T-cell (primary cell): ENCODE measurements at regions of chr19 and their contacts with region 1.

Region 1: DNA sequence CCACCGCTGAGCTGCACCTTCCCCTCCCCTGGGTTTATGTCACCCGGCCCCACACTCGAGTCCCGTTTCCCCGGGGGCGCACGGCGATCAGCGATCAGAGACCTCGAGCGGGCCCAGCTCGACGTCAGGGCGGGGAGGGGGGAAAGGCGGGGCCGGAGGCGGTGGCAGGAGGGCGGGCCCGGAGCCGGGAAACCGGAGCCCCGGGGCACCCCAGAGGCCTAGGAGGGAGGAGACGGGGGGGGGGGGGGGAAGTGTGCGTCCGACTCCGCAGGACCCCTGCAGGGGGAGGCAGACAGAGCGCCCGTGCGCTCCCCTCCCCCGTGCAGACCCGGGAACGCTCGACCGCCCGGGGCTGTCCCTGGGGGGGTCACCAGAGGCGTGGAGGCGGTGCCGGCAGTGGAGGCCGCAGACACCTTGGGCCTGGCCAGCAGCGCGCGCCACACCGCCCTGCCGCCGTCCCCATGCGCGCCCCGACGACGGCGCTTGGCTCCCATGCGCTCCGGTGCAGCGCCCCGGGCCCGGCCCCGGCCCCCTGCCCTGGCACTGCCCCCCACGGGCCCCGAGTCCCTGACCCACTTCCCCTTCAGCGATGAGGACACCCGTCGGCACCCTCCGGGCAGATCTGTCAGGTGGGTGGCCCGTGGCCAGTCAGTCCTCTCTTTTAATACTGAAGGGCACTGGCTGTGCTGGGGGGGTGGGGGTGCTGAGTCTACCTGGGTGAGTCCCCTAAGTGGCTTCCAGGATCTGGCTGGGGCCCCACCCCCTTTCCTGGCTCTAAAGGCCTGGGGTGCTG is 11.8 kb downstream of the PDE4A start:
- DNase-seq: peak in 34 of 35 experiments; percentile 45 to 83 (median 66)
- ATAC-seq: peak; percentile 57 to 72 (median 64)
- H3K4me3 ChIP-seq: peak overlapping the region; percentile 35 to 42
- H3K4me3 Mint-ChIP-seq: peak overlapping the region; percentile 73 to 87 (median 81)
- H3K27ac ChIP-seq: peak overlapping the region; percentile 86
- H3K27ac Mint-ChIP-seq: peak overlapping the region; percentile 83 to 86
- H3K4me1 ChIP-seq: peaks cover 0 to 66% of the 10 kb centered on the region in 2 experiments
- H3K4me1 Mint-ChIP-seq: peaks cover 44 to 59% (median 56%) of the 10 kb centered on the region in 3 donors
- H3K27me3 ChIP-seq: peaks cover 2 to 24% of the 10 kb centered on the region in 2 experiments
- H3K27me3 Mint-ChIP-seq: peaks cover 33% of the 10 kb centered on the region in 2 donors

Region 2: DNA sequence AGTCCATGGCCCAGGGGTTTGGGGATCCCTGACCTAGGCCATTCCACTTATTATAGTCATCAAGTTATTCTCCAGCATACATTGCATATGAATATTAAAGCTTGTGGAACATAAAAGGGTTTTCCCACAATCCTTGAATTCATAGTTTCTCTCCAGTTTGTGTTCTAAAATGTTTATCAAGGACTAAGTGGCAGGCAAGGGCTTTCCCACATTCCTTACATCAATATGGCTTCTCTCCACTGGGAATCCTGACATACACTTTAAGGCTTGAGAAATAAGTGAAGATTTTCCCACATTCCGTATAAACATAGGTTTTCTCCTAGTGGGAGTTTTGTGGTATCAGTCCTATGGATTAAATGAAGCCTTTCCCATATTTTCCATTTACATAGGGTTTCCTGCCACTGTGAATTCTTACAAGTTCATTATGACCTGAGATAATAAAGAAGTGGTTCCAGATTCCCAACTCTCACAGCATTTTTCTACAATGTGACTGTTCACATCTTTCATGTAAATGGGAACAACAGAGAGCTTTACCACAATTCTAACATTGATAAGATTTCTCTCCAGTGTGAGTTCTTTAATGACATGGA is 908.2 kb before region 1 on chr19:
- CTCF ChIA-PET with region 1: interaction called in 1 of 2 experiments, 11 read pairs
- POLR2A ChIA-PET with region 1: no interaction called
- DNase-seq: no peak
- ATAC-seq: no peak
- H3K4me3 ChIP-seq: no peak overlapping the region
- H3K4me3 Mint-ChIP-seq: no peak overlapping the region
- H3K27ac ChIP-seq: no peak overlapping the region
- H3K27ac Mint-ChIP-seq: no peak overlapping the region
- H3K4me1 ChIP-seq: no peaks in the 10 kb centered on the region
- H3K4me1 Mint-ChIP-seq: no peaks in the 10 kb centered on the region
- H3K27me3 ChIP-seq: peaks cover 0 to 3% of the 10 kb centered on the region in 2 experiments
- H3K27me3 Mint-ChIP-seq: no peaks in the 10 kb centered on the region

Region 3: DNA sequence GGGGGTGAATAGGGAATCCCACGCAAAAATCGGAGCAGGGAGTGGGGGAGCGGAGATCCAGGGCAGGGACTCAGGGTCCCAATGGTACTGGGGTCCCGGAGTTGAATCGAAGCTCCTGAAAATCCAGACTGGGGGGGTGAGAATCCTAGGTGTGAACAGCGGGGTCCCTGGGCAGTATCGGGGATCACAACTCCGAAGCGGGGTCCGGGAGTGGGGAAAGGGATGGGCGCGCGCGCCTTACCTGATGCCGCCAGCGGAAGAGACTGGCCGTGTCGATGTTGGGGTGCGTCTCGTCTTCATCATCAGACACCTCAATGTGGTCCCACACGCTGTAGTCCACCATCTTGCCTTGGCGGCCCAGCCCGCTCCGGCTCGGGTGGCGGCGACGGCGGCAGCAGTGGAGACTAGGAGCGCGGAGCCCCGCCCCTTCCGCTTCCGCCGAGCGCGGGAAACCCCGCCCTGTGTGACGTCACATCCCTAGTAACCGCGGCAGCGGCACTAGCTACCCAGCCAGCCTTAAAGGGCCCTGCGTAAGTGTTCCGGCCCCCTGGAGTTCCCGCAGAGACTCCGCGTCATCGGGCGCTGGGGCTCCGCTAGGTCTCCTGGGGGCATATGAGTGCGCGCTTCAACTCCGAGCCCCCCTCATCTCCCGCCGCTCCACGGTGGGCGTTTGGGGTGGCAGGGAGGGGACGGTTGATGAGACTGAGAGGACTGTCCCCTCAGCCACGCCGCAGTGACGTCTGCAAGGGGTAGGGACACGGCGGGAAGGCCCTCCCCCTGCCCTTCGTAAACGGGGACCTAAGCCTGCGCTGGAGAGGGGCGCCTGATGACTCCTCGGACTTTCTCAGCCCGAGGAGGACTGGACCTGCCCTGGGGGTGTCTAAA is 28.8 kb before region 1 on chr19 and contains the start of gene CDC37:
- CTCF ChIA-PET with region 1: interaction called, 7 to 14 read pairs
- POLR2A ChIA-PET with region 1: interaction called, 4 to 9 read pairs
- DNase-seq: peak; percentile 92 to 99 (median 97)
- ATAC-seq: peak; percentile 81 to 84 (median 84)
- H3K4me3 ChIP-seq: peak within 1 kb of the TSS; percentile 82 to 91
- H3K4me3 Mint-ChIP-seq: peak within 1 kb of the TSS; percentile 89 to 95 (median 94)
- H3K27ac ChIP-seq: peak within 1 kb of the TSS; percentile 89
- H3K27ac Mint-ChIP-seq: peak within 1 kb of the TSS; percentile 78 to 92
- H3K4me1 ChIP-seq: peaks cover 33 to 84% of the 10 kb centered on the region in 2 experiments
- H3K4me1 Mint-ChIP-seq: peaks cover 63 to 75% (median 69%) of the 10 kb centered on the region in 3 donors
- H3K27me3 ChIP-seq: peaks cover 0 to 16% of the 10 kb centered on the region in 2 experiments
- H3K27me3 Mint-ChIP-seq: no peaks in the 10 kb centered on the region
- total RNA-seq, gene CDC37: 163 to 205 (median 190) TPM

Region 4: DNA sequence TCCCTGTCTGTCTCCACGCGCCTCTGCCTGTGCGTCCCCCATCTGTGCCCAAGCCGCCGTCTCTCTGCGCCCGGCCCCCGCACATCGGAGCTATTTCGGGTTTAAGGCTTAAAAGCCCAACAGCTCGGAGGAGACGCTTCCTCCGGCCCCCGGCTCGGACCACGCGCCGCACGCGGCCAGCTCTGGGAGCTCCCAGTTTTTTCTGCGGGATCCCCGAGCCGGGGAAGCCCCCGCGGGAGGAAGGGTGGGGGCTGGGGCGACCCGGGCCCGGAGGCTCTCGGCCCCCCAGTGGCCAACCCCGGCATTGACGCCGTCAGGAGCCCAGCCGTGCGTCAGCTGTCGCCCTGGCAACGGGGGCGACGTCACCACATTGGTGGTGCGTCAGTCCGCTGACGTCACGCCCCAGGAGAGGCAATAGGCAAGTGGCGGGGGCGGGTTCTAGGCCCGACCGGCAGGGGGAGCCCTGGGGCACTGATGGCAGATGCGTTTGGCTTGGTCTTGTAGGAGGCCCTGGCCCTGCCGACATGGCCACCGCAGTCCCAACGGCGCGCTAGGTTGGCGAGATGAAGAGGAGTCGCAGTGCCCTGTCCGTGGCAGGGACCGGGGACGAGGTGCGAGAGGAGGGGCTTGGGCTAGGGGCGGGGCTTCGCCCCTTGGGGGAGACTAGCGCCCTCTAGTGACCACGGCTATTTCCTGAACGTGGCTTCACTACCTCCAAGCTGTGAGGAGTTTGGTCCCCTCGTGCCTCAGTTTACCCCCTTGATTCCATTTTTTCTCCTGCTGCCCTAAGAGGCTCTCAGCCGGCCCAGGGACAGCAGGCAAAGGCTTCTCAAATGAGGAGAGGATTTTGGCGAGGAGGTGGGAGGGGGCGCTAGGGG is 15.5 kb before region 1 on chr19:
- CTCF ChIA-PET with region 1: interaction called, 3 to 27 read pairs
- POLR2A ChIA-PET with region 1: interaction called, 6 read pairs
- DNase-seq: peak; percentile 71 to 100 (median 97)
- ATAC-seq: peak; percentile 65 to 78 (median 74)
- H3K4me3 ChIP-seq: peak overlapping the region; percentile 60 to 64
- H3K4me3 Mint-ChIP-seq: peak overlapping the region; percentile 59 to 74 (median 61)
- H3K27ac ChIP-seq: peak overlapping the region; percentile 79
- H3K27ac Mint-ChIP-seq: peak overlapping the region; percentile 66
- H3K4me1 ChIP-seq: peaks cover 18 to 79% of the 10 kb centered on the region in 2 experiments
- H3K4me1 Mint-ChIP-seq: peaks cover 44 to 60% (median 55%) of the 10 kb centered on the region in 3 donors
- H3K27me3 ChIP-seq: peaks cover 8 to 56% of the 10 kb centered on the region in 2 experiments
- H3K27me3 Mint-ChIP-seq: peaks cover 29 to 38% of the 10 kb centered on the region in 2 donors

Region 5: GRCh38 chr19:11475861-11476260 is 1043.7 kb after region 1 on chr19:
- CTCF ChIA-PET with region 1: no interaction called
- POLR2A ChIA-PET with region 1: no interaction called
- DNase-seq: no peak
- ATAC-seq: no peak
- H3K4me3 ChIP-seq: no peak overlapping the region
- H3K4me3 Mint-ChIP-seq: no peak overlapping the region
- H3K27ac ChIP-seq: no peak overlapping the region
- H3K27ac Mint-ChIP-seq: no peak overlapping the region
- H3K4me1 ChIP-seq: peaks cover 2 to 9% of the 10 kb centered on the region in 2 experiments
- H3K4me1 Mint-ChIP-seq: peaks cover 4 to 6% (median 6%) of the 10 kb centered on the region in 3 donors
- H3K27me3 ChIP-seq: peaks cover 2 to 27% of the 10 kb centered on the region in 2 experiments
- H3K27me3 Mint-ChIP-seq: peaks cover 14 to 22% of the 10 kb centered on the region in 2 donors

Region 6: GRCh38 chr19:11505032-11505503 is 1072.9 kb after region 1 on chr19:
- CTCF ChIA-PET with region 1: no interaction called
- POLR2A ChIA-PET with region 1: no interaction called
- DNase-seq: peak; percentile 85 to 98 (median 94)
- ATAC-seq: peak; percentile 91 to 95 (median 94)
- H3K4me3 ChIP-seq: peak overlapping the region; percentile 32 to 68
- H3K4me3 Mint-ChIP-seq: peak overlapping the region; percentile 82 to 88 (median 83)
- H3K27ac ChIP-seq: peak overlapping the region; percentile 62
- H3K27ac Mint-ChIP-seq: peak overlapping the region; percentile 81 to 82
- H3K4me1 ChIP-seq: peaks cover 2 to 21% of the 10 kb centered on the region in 2 experiments
- H3K4me1 Mint-ChIP-seq: peaks cover 15 to 20% (median 18%) of the 10 kb centered on the region in 3 donors
- H3K27me3 ChIP-seq: no peaks in the 10 kb centered on the region
- H3K27me3 Mint-ChIP-seq: no peaks in the 10 kb centered on the region